Heart left ventricle (tissue), 16 donors: ENCODE measurements at regions of chr3 and their contacts with region 1.

Region 1: DNA sequence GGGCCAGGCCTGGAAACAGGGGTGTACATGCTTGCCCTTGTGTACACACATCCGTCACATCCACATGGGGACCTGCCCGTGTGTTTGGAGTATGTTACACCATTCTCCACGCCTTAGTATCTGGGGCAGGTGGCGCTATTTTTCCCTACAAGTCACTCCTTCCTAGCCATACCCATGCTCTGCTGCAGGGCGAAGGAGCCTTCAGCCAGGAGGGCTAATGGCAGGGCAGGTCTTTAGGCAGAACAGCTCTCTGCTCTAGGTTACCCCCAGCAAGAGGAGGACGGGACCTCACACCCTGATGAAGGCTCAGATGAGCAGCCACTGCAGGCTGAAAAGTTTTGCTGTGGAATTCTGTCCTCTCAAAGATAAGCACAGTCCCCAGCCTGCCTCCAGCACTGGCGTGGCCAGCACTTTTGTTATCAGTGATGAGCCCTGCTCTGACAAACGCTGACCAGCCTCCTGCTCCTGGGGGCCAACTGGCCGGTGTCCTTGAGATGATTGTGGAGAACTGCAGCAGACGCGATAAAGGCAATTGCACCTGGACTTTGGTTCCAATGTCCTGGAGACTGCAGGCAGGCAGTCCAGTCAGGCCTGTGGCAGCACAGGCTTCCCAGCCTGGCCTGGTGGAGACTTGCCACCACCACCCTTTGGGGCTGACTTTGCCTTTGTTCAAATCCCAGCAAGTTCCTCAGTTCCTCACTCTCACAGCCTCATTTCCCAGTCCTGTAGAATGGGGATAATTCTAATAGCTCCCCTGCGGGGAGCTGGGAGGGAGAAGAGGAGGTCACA is 19.8 kb upstream of the PIGZ start:
- DNase-seq: peak in 3 of 5 donors; percentile 22 to 56 (median 31)
- ATAC-seq: peak in 3 of 4 donors; percentile 43 to 71 (median 67)
- H3K4me3 ChIP-seq: no peak overlapping the region
- H3K27ac ChIP-seq: no peak overlapping the region
- H3K4me1 ChIP-seq: peaks cover 0 to 10% (median 6%) of the 10 kb centered on the region in 12 donors
- H3K27me3 ChIP-seq: peaks cover 0 to 9% (median 0%) of the 10 kb centered on the region in 9 donors
- CTCF ChIP-seq: no peak
- POLR2A ChIP-seq: no peak

Region 2: GRCh38 chr3:196486263-196486662 is 502.2 kb before region 1 on chr3:
- intact Hi-C with region 1: no loop called
- DNase-seq: no peak
- ATAC-seq: no peak
- H3K4me3 ChIP-seq: no peak overlapping the region
- H3K27ac ChIP-seq: no peak overlapping the region
- H3K4me1 ChIP-seq: peaks cover 0 to 8% (median 0%) of the 10 kb centered on the region in 12 donors
- H3K27me3 ChIP-seq: no peaks in the 10 kb centered on the region
- CTCF ChIP-seq: peak; percentile 13 to 52 (median 40)
- POLR2A ChIP-seq: no peak

Region 3: GRCh38 chr3:196894557-196895297 is 93.7 kb before region 1 on chr3:
- intact Hi-C with region 1: no loop called
- DNase-seq: no peak
- ATAC-seq: no peak
- H3K4me3 ChIP-seq: no peak overlapping the region
- H3K27ac ChIP-seq: no peak overlapping the region
- H3K4me1 ChIP-seq: peaks cover 0 to 9% (median 4%) of the 10 kb centered on the region in 12 donors
- H3K27me3 ChIP-seq: no peaks in the 10 kb centered on the region
- CTCF ChIP-seq: no peak
- POLR2A ChIP-seq: no peak

Region 4: DNA sequence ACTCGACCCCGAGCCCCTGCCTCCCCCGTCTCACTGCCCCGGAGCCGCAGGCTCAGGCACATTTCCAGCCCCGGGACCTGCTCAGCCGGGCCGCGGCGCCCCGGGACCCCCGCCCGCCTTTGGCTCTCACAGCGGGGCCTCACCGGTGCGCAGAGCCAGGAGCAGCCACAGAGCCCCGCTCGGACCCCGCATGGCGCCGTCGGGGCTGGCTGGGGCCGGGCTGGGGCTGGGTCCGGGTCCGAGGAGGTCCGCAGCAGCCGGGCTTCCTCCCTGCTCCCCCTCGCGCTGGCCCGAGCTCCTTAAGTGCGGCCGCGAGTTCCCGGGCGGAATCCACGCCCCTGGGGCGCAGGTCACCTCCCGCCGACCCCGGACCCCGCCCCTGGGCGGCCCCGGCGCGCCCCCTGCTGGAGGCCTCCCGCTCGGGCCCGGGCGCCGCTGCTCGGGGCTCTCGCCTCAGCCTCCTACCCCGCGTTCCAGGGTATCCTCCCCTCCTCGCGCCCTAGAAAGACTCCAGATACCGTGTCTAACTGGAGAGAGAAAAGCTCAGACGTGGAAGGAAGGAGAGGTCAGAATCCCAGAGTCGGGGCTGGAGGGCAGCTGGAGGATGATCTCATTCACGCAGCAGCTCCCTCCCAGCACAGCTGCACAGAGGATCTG is 41.2 kb after region 1 on chr3 and contains the start of gene MELTF:
- intact Hi-C with region 1: no loop called
- DNase-seq: peak; percentile 47 to 83 (median 64)
- ATAC-seq: peak in 3 of 4 donors; percentile 30 to 64 (median 64)
- H3K4me3 ChIP-seq: peak within 1 kb of the TSS; percentile 19 to 68 (median 54)
- H3K27ac ChIP-seq: peak within 1 kb of the TSS in 10 of 12 donors; percentile 60 to 89 (median 80)
- H3K4me1 ChIP-seq: peaks cover 0 to 38% (median 24%) of the 10 kb centered on the region in 12 donors
- H3K27me3 ChIP-seq: peaks cover 0 to 15% (median 0%) of the 10 kb centered on the region in 9 donors
- CTCF ChIP-seq: peak; percentile 64 to 89 (median 80)
- POLR2A ChIP-seq: no peak
- total RNA-seq, gene MELTF: 4.9 to 43.8 (median 10.3) TPM

Region 5: DNA sequence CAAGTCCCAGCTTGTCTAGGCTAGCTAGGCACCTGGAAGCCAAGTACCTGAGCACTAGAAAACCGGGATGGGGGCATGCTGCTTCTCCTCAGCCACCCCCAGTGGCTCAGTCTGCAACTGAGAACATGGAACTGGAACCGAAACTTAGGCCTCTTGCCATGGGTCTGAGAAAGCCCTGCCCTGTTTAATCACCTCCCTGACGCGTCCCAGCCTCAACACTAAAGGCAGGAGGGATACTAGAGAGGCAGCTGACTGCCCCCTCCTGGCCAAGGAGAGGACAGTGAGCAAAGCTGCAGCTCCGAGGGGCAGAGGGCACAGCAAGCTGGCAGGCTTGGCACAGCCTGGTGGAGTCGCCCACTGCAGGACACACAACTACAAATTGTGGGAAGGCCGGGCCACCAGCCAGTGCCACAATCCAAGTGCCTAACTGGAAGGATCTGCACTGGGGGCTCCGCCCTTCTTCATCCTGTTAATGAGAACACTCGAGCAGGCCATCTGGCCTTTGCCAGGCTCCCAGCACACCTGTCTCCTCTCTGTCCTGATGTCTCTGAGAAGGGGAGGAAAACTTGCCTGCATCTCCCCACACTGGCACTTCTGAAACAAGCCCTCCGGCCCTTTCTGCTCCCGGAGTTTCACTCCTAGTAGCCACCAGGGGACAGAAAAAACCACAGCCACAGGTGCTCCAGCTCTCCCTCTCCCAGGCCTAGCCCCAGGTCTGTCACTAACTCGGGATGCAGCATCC is 513.6 kb after region 1 on chr3:
- intact Hi-C with region 1: loop called in 2 of 10 experiments (anchors 10 kb)
- DNase-seq: peak in 1 of 5 donors; percentile 44
- ATAC-seq: peak in 3 of 4 donors; percentile 67 to 78 (median 70)
- H3K4me3 ChIP-seq: no peak overlapping the region
- H3K27ac ChIP-seq: no peak overlapping the region
- H3K4me1 ChIP-seq: no peaks in the 10 kb centered on the region
- H3K27me3 ChIP-seq: no peaks in the 10 kb centered on the region
- CTCF ChIP-seq: peak in 11 of 12 donors; percentile 16 to 50 (median 36)
- POLR2A ChIP-seq: no peak